K562 (cell line): ENCODE measurements at regions of chr6 and their contacts with region 1.

Region 1: GRCh38 chr6:3052481-3053230 is 15.6 kb upstream of the RIPK1 start:
- DNase-seq: peak in 3 of 4 experiments; percentile 41 to 53 (median 45)
- ATAC-seq: peak; percentile 1; the same call in 2 of the 3 replicates
- H3K4me3 ChIP-seq: peak overlapping the region; percentile 66
- H3K27ac ChIP-seq: peak overlapping the region; percentile 80
- H3K4me1 ChIP-seq: peaks cover 33 to 35% of the 10 kb centered on the region in 2 experiments
- H3K27me3 ChIP-seq: no peaks in the 10 kb centered on the region
- CTCF ChIP-seq: no peak
- EP300 ChIP-seq: no peak
- POLR2A ChIP-seq: no peak
- RAD21 ChIP-seq: no peak

Region 2: DNA sequence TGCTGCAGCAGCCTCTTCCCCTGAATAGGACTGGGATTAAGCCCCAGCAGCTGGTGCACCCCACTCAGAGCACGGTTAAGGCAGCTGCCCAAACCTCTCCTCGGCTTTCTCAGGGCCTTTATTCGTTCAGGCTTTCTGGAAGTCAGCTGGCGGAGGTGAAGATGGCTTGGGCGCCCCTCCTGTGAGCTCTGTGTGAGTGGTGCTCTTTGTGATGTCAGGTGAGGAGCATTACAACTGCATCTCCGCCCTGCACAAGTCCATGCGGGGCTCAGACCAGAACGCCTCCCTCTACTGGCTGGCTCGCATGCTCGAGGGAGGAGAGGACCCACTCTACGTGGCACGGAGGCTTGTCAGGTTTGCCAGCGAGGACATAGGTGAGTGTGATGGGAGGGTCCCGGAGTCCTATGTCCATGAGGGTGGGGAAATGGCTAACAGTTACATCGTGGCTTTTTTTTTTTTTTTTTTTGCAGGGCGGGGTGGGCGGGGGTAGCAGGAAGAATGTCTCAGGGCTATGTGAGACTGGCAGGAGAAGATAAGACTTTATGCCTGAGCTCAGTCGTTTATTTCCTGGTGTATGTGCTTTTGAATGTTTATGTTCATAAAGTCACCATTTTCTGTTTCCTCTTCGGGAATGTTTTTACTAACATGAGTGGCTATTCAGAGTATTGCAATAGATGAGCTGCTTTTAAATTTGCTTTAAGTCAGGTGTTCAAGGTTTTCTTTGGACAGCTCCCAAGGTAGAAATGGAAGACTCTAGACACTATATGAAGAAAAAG is 269.3 kb before region 1 on chr6:
- CTCF ChIA-PET with region 1: no interaction called
- POLR2A ChIA-PET with region 1: no interaction called
- in situ Hi-C with region 1: loop called (anchors 10 kb)
- intact Hi-C with region 1: no loop called
- DNase-seq: peak; percentile 63 to 82 (median 74)
- ATAC-seq: peak; percentile 92
- H3K4me3 ChIP-seq: peak overlapping the region; percentile 21; the same call in 1 of the 2 replicates
- H3K27ac ChIP-seq: peak overlapping the region; percentile 61
- H3K4me1 ChIP-seq: peaks cover 19 to 20% of the 10 kb centered on the region in 2 experiments
- H3K27me3 ChIP-seq: no peaks in the 10 kb centered on the region
- CTCF ChIP-seq: peak; percentile 39 to 64 (median 49)
- EP300 ChIP-seq: peak; percentile 36; the same call in 1 of the 2 replicates
- POLR2A ChIP-seq: no peak; the same call in 1 of the 2 replicates
- RAD21 ChIP-seq: 0 out of 4 replicates have a peak, but pooled peaks of 1 of the 2 experiments have one; percentile 32

Region 3: GRCh38 chr6:2841264-2842138 is 211.2 kb before region 1 on chr6 and contains the start of gene SERPINB1:
- CTCF ChIA-PET with region 1: interaction called, 7 read pairs
- POLR2A ChIA-PET with region 1: interaction called, 9 read pairs
- in situ Hi-C with region 1: loop called (anchors 5 kb)
- intact Hi-C with region 1: loop called (anchors 1 kb)
- DNase-seq: peak; percentile 92 to 98 (median 94)
- ATAC-seq: peak; percentile 93
- H3K4me3 ChIP-seq: peak within 1 kb of the TSS; percentile 52
- H3K27ac ChIP-seq: peak within 1 kb of the TSS; percentile 84
- H3K4me1 ChIP-seq: peaks cover 27 to 32% of the 10 kb centered on the region in 2 experiments
- H3K27me3 ChIP-seq: no peaks in the 10 kb centered on the region
- CTCF ChIP-seq: peak; percentile 30 to 39 (median 33); a peak in 5 of 6 replicates
- EP300 ChIP-seq: peak; percentile 81
- POLR2A ChIP-seq: peak; percentile 91
- RAD21 ChIP-seq: peak; percentile 15 to 19; a peak in 1 of 4 replicates
- polyA plus RNA-seq, gene SERPINB1: 63.8 to 68.7 TPM

Region 4: GRCh38 chr6:2931970-2932748 is 120.5 kb before region 1 on chr6:
- CTCF ChIA-PET with region 1: no interaction called
- POLR2A ChIA-PET with region 1: no interaction called
- in situ Hi-C with region 1: no loop called
- intact Hi-C with region 1: loop called (anchors 5 kb)
- DNase-seq: peak; percentile 94 to 97 (median 94)
- ATAC-seq: peak; percentile 99
- H3K4me3 ChIP-seq: no peak overlapping the region
- H3K27ac ChIP-seq: 0 out of 3 replicates have a peak overlapping the region, but pooled peaks have one; percentile 2
- H3K4me1 ChIP-seq: peaks cover 9 to 13% of the 10 kb centered on the region in 2 experiments; a peak in 4 of 5 replicates
- H3K27me3 ChIP-seq: no peaks in the 10 kb centered on the region
- CTCF ChIP-seq: peak; percentile 98 to 100 (median 99)
- EP300 ChIP-seq: peak; percentile 97
- POLR2A ChIP-seq: no peak
- RAD21 ChIP-seq: peak; percentile 98

Region 5: GRCh38 chr6:3023663-3024483 is 28.8 kb before region 1 on chr6:
- CTCF ChIA-PET with region 1: no interaction called
- POLR2A ChIA-PET with region 1: interaction called, 24 read pairs
- in situ Hi-C with region 1: no loop called
- intact Hi-C with region 1: loop called (anchors 1 kb)
- DNase-seq: peak; percentile 96 to 100 (median 96)
- ATAC-seq: peak; percentile 90
- H3K4me3 ChIP-seq: peak overlapping the region; percentile 75
- H3K27ac ChIP-seq: peak overlapping the region; percentile 98
- H3K4me1 ChIP-seq: peaks cover 32 to 46% of the 10 kb centered on the region in 2 experiments
- H3K27me3 ChIP-seq: no peaks in the 10 kb centered on the region
- CTCF ChIP-seq: 0 out of 6 replicates have a peak, but pooled peaks of 1 of the 3 experiments have one; percentile 2
- EP300 ChIP-seq: peak; percentile 96
- POLR2A ChIP-seq: peak; percentile 98
- RAD21 ChIP-seq: peak; percentile 20 to 39

Region 6: GRCh38 chr6:3068329-3069214 is 15.9 kb after region 1 on chr6 and contains the start of gene RIPK1:
- CTCF ChIA-PET with region 1: no interaction called
- POLR2A ChIA-PET with region 1: interaction called, 10 read pairs
- in situ Hi-C with region 1: no loop called
- intact Hi-C with region 1: no loop called
- DNase-seq: peak; percentile 96 to 98 (median 96)
- ATAC-seq: peak; percentile 85
- H3K4me3 ChIP-seq: peak within 1 kb of the TSS; percentile 84
- H3K27ac ChIP-seq: peak within 1 kb of the TSS; percentile 97
- H3K4me1 ChIP-seq: peaks cover 19 to 30% of the 10 kb centered on the region in 2 experiments
- H3K27me3 ChIP-seq: no peaks in the 10 kb centered on the region
- CTCF ChIP-seq: peak; percentile 57 to 68 (median 59); a peak in 5 of 6 replicates
- EP300 ChIP-seq: peak; percentile 51
- POLR2A ChIP-seq: peak; percentile 95
- RAD21 ChIP-seq: peak in 1 of 2 experiments; percentile 34; a peak in 3 of 4 replicates
- polyA plus RNA-seq, gene RIPK1: 3.8 to 4.5 TPM